ENCODE measurements at regions of chr12 and their contacts with region 1.

Region 1: DNA sequence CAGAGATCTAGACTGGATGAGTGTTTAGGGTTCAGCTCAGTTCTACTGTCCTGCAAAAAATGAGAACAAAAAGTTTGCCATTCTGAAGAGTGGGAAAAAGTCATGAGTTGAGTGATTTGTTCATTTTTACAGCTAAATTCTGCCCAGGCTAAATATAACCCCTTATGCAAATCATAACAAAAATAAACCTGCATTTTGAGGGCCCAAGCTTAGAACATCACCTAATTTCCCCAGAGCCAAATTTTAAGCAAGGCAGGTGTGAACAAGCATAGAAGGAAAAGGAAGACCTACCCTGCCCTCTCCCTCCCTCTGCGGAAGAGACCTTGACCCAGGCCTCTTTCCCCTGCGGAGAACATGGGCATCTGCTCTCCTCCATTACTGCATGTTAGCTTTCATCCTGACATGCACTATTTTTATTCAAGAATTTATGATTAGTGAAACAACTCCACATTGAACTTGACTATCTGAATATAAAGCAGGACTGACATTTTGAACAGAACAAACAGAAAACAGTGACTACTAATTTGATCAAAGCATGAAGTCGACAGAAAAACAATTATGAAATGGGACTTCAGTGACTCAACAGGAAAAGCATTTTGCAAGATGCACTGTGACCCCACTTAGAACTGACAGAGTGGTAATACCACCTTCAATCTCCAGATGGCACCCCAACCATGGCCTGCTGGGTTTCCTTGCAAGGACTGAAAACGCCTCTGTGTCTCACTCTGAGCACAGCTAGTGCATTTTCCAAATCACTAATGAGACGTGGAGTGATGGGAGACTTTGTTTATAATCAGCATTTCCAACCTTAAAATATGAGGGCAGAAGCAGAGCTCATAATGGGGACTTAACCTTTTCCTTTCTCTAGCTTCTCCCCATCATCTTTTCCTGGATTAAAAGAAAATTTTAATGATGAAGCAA is 30.9 kb upstream of the SELPLG start:
- DNase-seq: peak; percentile 91
- ATAC-seq: peak; percentile 92
- H3K4me3 ChIP-seq: peak overlapping the region; percentile 43
- H3K27ac ChIP-seq: peak overlapping the region; percentile 96
- H3K4me1 ChIP-seq: peaks cover 51% of the 10 kb centered on the region
- H3K27me3 ChIP-seq: no peaks in the 10 kb centered on the region
- CTCF ChIP-seq: peak; percentile 93 to 98 (median 97); a peak in 5 of 6 replicates
- EP300 ChIP-seq: peak; percentile 46 to 71; a peak in 3 of 4 replicates
- POLR2A ChIP-seq: peak; percentile 42; the same call in 1 of the 2 replicates
- RAD21 ChIP-seq: peak; percentile 100

Region 2: DNA sequence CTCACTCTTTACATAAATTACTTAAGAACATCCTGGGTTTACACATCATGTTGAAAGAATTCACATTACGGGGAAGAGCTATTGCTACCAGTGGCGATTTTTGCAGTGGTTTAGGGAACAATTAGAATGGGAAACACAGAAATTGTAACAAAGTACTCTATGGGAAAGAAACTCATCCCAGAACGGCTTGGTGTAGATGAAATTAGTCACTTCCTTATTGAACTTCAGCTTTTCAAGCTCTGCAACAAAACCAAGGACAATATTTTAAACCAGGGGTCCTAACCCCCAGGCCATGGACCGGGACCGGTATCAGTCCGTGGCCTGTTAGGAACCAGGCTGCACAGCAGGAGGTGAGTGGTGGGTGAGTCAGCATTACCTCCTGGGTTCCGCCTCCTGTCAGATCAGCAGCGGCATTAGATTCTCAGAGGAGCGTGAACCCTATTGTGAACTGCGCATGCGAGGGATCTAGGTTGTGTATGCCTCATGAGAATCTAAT is 181.8 kb before region 1 on chr12:
- CTCF ChIA-PET with region 1: no interaction called
- POLR2A ChIA-PET with region 1: no interaction called
- RAD21 ChIA-PET with region 1: no interaction called
- SMC1A ChIA-PET with region 1: no interaction called
- in situ Hi-C with region 1: no loop called
- intact Hi-C with region 1: no loop called
- DNase-seq: no peak
- ATAC-seq: no peak
- H3K4me3 ChIP-seq: no peak overlapping the region
- H3K27ac ChIP-seq: no peak overlapping the region
- H3K4me1 ChIP-seq: no peaks in the 10 kb centered on the region
- H3K27me3 ChIP-seq: no peaks in the 10 kb centered on the region
- CTCF ChIP-seq: no peak
- EP300 ChIP-seq: no peak
- POLR2A ChIP-seq: no peak
- RAD21 ChIP-seq: no peak

Region 3: GRCh38 chr12:108633534-108634248 is 30.9 kb before region 1 on chr12 and contains the start of gene SELPLG:
- CTCF ChIA-PET with region 1: interaction called, 193 read pairs
- POLR2A ChIA-PET with region 1: interaction called, 26 read pairs
- RAD21 ChIA-PET with region 1: interaction called, 221 read pairs
- SMC1A ChIA-PET with region 1: interaction called, 219 read pairs
- in situ Hi-C with region 1: no loop called
- intact Hi-C with region 1: loop called (anchors 2 kb)
- DNase-seq: peak; percentile 99
- ATAC-seq: peak; percentile 64
- H3K4me3 ChIP-seq: peak within 1 kb of the TSS; percentile 76
- H3K27ac ChIP-seq: peak within 1 kb of the TSS; percentile 86
- H3K4me1 ChIP-seq: peaks cover 87% of the 10 kb centered on the region
- H3K27me3 ChIP-seq: no peaks in the 10 kb centered on the region
- CTCF ChIP-seq: peak; percentile 32 to 41 (median 36); a peak in 3 of 6 replicates
- EP300 ChIP-seq: peak; percentile 99
- POLR2A ChIP-seq: peak; percentile 77
- RAD21 ChIP-seq: no peak; the same call in 1 of the 2 replicates
- polyA plus RNA-seq, gene SELPLG: 3.2 to 5.3 TPM

Region 4: DNA sequence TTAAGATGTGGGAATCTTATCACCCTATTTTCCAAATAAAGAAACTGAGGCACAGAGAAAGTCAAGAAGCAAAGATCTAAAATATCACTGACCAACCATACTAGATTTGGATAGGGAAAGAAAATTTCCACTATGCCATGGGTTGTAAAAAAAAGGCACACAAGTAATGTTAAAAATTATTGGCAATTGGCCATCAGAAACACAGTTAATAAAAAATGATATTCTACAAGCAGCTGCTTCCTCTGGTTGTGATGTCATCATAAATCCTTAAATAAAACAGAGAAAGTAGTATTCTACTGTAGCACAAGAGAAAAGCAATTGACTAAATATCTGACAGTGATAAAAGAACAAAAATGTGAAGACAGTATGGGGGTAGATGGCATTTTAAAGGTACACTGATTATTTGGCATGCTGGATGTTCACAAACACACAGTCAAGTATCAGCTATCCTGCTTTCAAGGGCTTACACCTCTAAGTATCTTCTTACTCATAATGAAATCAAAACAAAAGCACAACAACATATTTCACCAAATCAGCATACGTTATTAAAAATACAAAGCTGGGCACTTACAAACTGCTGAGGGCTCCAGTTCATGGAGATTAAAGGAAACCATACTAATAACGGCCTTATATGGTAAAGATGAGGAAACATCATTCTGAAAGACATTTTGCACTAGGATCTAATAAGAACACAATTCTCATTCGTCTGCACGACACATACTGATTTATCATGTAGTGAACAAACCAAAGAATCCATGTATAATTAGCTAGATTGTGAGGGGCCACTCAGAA is 21.1 kb after region 1 on chr12:
- CTCF ChIA-PET with region 1: interaction called, 48 read pairs
- POLR2A ChIA-PET with region 1: interaction called, 19 read pairs
- RAD21 ChIA-PET with region 1: interaction called, 69 read pairs
- SMC1A ChIA-PET with region 1: interaction called, 215 read pairs
- in situ Hi-C with region 1: no loop called
- intact Hi-C with region 1: no loop called
- DNase-seq: no peak
- ATAC-seq: peak; percentile 43
- H3K4me3 ChIP-seq: no peak overlapping the region
- H3K27ac ChIP-seq: peak overlapping the region; percentile 57
- H3K4me1 ChIP-seq: peaks cover 42% of the 10 kb centered on the region
- H3K27me3 ChIP-seq: no peaks in the 10 kb centered on the region
- CTCF ChIP-seq: no peak
- EP300 ChIP-seq: no peak
- POLR2A ChIP-seq: no peak
- RAD21 ChIP-seq: no peak

Region 5: GRCh38 chr12:108722992-108723766 is 58.6 kb after region 1 on chr12:
- CTCF ChIA-PET with region 1: interaction called, 23 read pairs
- POLR2A ChIA-PET with region 1: interaction called, 4 read pairs
- RAD21 ChIA-PET with region 1: interaction called, 15 read pairs
- SMC1A ChIA-PET with region 1: interaction called, 61 read pairs
- in situ Hi-C with region 1: no loop called
- intact Hi-C with region 1: no loop called
- DNase-seq: no peak
- ATAC-seq: peak; percentile 52
- H3K4me3 ChIP-seq: no peak overlapping the region
- H3K27ac ChIP-seq: no peak overlapping the region
- H3K4me1 ChIP-seq: peaks cover 11% of the 10 kb centered on the region
- H3K27me3 ChIP-seq: no peaks in the 10 kb centered on the region
- CTCF ChIP-seq: no peak
- EP300 ChIP-seq: no peak
- POLR2A ChIP-seq: no peak
- RAD21 ChIP-seq: no peak

Region 6: GRCh38 chr12:108768591-108769500 is 104.2 kb after region 1 on chr12:
- CTCF ChIA-PET with region 1: interaction called, 12 read pairs
- POLR2A ChIA-PET with region 1: no interaction called
- RAD21 ChIA-PET with region 1: interaction called, 14 read pairs
- SMC1A ChIA-PET with region 1: interaction called, 15 read pairs
- in situ Hi-C with region 1: no loop called
- intact Hi-C with region 1: no loop called
- DNase-seq: peak; percentile 17
- ATAC-seq: peak; percentile 86
- H3K4me3 ChIP-seq: 0 out of 2 replicates have a peak overlapping the region, but pooled peaks have one; percentile 10
- H3K27ac ChIP-seq: no peak overlapping the region
- H3K4me1 ChIP-seq: peaks cover 29% of the 10 kb centered on the region
- H3K27me3 ChIP-seq: no peaks in the 10 kb centered on the region
- CTCF ChIP-seq: 0 out of 6 replicates have a peak, but pooled peaks of 1 of the 3 experiments have one; percentile 0
- EP300 ChIP-seq: no peak
- POLR2A ChIP-seq: no peak
- RAD21 ChIP-seq: no peak

Region 7: GRCh38 chr12:108850854-108851573 is 186.4 kb after region 1 on chr12:
- CTCF ChIA-PET with region 1: interaction called, 60 read pairs
- POLR2A ChIA-PET with region 1: interaction called, 9 read pairs
- RAD21 ChIA-PET with region 1: interaction called, 45 read pairs
- SMC1A ChIA-PET with region 1: interaction called, 87 read pairs
- in situ Hi-C with region 1: no loop called
- intact Hi-C with region 1: loop called (anchors 1 kb)
- DNase-seq: peak; percentile 79
- ATAC-seq: peak; percentile 82
- H3K4me3 ChIP-seq: no peak overlapping the region
- H3K27ac ChIP-seq: peak overlapping the region; percentile 74
- H3K4me1 ChIP-seq: peaks cover 36% of the 10 kb centered on the region
- H3K27me3 ChIP-seq: no peaks in the 10 kb centered on the region
- CTCF ChIP-seq: peak in 2 of 3 experiments; percentile 27 to 56; a peak in 4 of 6 replicates
- EP300 ChIP-seq: peak; percentile 66 to 84; a peak in 3 of 4 replicates
- POLR2A ChIP-seq: no peak
- RAD21 ChIP-seq: peak; percentile 67; the same call in 1 of the 2 replicates

Region 8: DNA sequence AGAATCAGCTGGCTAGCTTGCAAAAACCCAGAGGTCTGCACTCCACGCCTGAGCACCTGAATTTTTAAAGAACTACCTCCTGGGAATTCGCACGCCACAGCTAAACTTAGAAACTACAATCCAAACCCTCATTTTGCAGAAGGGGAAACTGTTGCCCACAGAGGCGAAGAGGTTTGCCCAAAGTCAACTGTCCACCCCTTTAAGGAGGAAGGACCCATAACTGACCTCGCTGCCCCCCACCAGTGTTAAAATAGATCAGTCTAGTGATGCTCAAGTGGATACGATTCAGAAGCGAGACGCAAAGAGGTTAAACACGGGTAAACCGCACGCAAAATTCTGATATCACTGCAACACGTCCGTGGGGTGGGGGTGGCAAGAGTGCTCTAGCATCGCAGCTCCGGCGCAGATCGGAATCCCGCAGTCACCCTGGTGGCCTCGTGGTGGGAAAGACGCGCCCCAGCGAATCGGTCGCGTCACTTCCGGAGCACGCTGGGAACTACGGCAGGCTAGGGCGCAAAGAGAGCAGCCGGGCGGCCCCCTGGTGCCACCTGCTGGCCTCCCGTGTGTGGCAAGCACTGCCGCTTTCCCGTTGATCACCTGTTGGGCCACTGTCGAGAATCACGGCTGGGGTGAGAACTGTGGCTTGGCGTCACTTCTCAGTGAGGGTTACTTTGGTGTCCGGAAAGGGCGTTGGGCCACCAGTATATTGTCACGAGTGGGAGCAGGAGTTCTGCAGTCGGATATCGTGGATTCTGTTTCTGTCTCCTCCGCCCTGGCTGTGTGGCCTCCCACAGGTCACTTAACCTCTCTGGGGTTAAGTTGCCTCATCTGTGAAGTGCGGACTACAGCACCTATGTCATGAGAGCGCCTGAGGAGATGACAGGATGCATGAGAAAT is 428.7 kb after region 1 on chr12 and contains the start of gene ALKBH2:
- CTCF ChIA-PET with region 1: interaction called, 17 read pairs
- POLR2A ChIA-PET with region 1: interaction called, 3 read pairs
- RAD21 ChIA-PET with region 1: interaction called, 8 read pairs
- SMC1A ChIA-PET with region 1: interaction called, 12 read pairs
- in situ Hi-C with region 1: loop called (anchors 10 kb)
- intact Hi-C with region 1: loop called (anchors 1 kb)
- DNase-seq: peak; percentile 72
- ATAC-seq: peak; percentile 73
- H3K4me3 ChIP-seq: peak within 1 kb of the TSS; percentile 77
- H3K27ac ChIP-seq: peak within 1 kb of the TSS; percentile 77
- H3K4me1 ChIP-seq: peaks cover 7% of the 10 kb centered on the region
- H3K27me3 ChIP-seq: no peaks in the 10 kb centered on the region
- CTCF ChIP-seq: peak; percentile 98 to 99 (median 98); a peak in 5 of 6 replicates
- EP300 ChIP-seq: no peak
- POLR2A ChIP-seq: peak; percentile 97
- RAD21 ChIP-seq: peak; percentile 75
- polyA plus RNA-seq, gene ALKBH2: 5.6 to 8.8 TPM